ENCODE measurements at regions of chr2 and their contacts with region 1.

Region 1: DNA sequence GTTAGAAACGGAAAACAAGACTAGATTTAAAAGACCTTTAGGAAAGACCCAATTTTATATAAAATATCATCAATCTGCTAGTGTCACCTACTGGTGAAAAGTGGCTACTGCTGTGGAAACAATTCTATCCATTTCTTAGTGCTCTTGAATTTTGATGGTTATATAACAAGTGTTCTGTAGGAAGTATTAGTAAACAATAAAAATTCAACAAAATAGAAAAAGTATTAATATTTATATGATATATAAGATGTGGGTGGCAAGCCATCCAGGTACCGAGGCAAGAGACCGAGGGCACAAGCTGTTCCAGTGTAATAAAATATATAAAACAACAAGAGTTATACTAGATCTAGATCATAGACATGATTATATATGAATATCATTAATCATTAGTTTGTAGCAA is 6.2 kb upstream of the TMEM87B start:
- DNase-seq: no peak
- ATAC-seq: peak; percentile 77

Region 2: DNA sequence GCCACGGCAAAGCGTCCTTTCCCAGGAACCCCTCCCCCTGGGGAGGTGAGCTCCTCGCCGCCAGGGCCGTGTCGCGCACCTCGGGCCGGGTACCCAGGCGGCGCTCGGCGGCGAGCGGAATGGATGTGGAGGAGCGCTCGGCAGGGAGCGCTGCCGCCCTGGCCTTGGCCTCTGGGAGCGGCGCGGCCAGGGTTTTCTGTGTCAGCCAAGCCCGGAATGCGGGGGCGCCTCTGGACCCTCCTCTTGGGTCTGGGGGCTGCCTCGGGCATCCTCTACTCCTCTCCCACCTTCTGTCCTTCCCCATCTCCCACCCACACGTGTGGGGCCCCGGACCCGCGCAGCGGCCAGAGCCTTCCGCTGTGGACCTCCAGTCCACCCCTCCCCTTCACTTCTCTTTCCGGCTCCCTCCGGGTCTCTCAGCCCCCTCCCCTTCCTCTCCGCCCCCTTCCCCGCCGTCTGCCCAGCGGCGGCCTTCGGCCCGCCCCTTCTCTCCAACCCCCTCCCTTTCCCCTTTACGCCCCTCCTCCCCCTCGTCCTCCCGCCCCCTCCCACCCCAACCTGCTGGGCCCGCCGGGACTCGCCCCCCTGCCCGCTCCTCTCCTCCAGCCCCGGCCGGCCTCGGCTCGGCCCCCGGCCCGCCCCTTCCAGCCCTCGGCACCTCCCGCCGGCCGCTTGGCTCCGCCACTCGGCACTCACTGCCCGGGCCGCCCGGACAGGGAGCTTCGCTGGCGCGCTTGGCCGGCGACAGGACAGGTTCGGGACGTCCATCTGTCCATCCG is 150.8 kb before region 1 on chr2 and contains the start of gene MERTK:
- intact Hi-C with region 1: loop called (anchors 5 kb)
- DNase-seq: peak; percentile 89
- ATAC-seq: peak; percentile 90
- total RNA-seq, gene MERTK: 18.9 TPM

Measured in sciatic nerve (tissue), 2 donors.